K562 (cell line): ENCODE measurements at regions of chr14 and their contacts with region 1.

Region 1: DNA sequence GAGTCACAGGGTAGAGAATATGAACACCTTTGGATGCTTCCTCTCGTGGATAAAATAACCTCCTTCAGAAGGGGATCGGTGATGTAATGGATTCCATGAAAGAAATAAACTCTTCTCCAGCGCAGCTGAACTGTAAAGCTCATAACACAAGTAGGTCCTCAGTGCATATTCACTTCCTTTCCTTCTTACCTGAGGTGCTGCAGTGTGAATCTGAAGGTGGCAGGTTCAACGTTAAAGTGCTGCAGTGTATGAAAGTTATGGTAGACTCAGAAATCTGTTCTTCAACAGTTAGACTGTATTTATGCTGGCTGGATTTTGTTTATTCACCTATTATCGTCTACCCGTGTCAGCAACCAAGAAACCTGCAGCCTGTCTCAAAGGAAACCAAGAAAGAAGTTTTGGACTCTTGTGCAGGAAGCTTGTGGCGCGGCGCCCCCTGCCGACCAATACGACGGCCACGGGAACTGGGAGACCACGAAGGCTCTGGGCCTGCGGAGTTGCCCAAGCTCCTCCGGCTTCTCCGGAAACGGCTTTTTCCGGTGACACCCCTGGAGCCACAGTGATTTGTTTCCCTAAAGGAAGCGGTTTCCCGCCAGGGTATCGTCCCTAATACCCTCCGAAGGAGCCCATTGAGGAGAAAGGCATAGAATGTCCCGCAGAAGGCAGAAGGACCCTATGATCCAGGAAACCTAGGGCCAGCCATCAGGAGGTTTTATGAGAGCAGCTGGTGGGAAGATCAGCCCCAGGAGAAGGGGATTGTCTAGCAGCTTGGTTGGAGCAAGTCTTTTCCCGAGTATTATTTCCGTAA is 17.6 kb upstream of the RNASE3 start:
- DNase-seq: peak; percentile 44 to 81 (median 50)
- ATAC-seq: peak; percentile 99
- H3K4me3 ChIP-seq: no peak overlapping the region
- H3K27ac ChIP-seq: no peak overlapping the region
- H3K4me1 ChIP-seq: no peaks in the 10 kb centered on the region; a peak in 1 of 5 replicates
- H3K27me3 ChIP-seq: no peaks in the 10 kb centered on the region; a peak in 1 of 5 replicates
- CTCF ChIP-seq: peak; percentile 79 to 85 (median 84)
- EP300 ChIP-seq: no peak
- POLR2A ChIP-seq: no peak
- RAD21 ChIP-seq: peak; percentile 63 to 72

Region 2: GRCh38 chr14:20956376-20956976 is 82.9 kb after region 1 on chr14:
- CTCF ChIA-PET with region 1: no interaction called
- POLR2A ChIA-PET with region 1: no interaction called
- in situ Hi-C with region 1: loop called (anchors 5 kb)
- intact Hi-C with region 1: no loop called
- DNase-seq: no peak
- ATAC-seq: no peak; the same call in 2 of the 3 replicates
- H3K4me3 ChIP-seq: no peak overlapping the region
- H3K27ac ChIP-seq: no peak overlapping the region
- H3K4me1 ChIP-seq: no peaks in the 10 kb centered on the region
- H3K27me3 ChIP-seq: no peaks in the 10 kb centered on the region; a peak in 3 of 5 replicates
- CTCF ChIP-seq: no peak
- EP300 ChIP-seq: no peak
- POLR2A ChIP-seq: no peak
- RAD21 ChIP-seq: no peak

Region 3: DNA sequence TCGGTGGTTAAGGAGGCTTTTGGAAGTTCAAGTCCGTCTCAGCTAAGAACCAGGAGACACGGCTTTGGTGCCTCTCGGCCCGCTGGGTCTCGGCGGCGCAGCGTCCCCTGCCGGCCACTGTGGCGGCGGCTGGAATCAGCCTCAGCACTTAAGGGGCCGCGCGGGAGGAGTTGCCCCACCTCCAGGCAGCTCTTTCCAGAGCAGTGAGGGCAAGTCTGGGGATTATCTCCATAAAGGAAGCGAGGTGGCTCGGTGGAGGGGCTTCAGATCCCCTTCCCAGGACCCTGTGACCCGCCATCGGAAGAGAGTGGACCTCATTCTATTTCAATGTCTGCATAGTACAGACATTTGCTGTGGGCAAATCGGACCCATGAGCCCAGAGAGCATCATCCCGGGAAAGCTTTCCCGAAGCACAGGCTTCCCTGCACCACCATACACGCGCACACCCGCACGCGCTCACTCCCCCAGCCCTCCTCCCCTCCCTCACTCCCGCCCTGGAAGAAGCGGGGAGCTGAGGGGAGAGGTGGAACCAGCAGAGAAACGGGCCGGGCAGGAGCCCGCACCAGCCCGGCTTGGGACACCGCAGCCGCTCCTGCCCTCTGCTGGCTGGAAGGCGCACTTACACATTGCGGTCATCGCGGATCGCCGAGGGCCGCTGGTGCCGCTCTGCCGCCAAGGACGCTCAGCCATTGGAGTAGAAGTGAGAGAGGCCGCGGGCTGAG is 97.6 kb after region 1 on chr14:
- CTCF ChIA-PET with region 1: no interaction called
- POLR2A ChIA-PET with region 1: interaction called, 4 read pairs
- in situ Hi-C with region 1: no loop called
- intact Hi-C with region 1: loop called (anchors 5 kb)
- DNase-seq: peak; percentile 80 to 85 (median 84)
- ATAC-seq: peak; percentile 97
- H3K4me3 ChIP-seq: peak overlapping the region; percentile 48
- H3K27ac ChIP-seq: no peak overlapping the region
- H3K4me1 ChIP-seq: peaks cover 0 to 10% of the 10 kb centered on the region in 2 experiments; a peak in 3 of 5 replicates
- H3K27me3 ChIP-seq: no peaks in the 10 kb centered on the region; a peak in 2 of 5 replicates
- CTCF ChIP-seq: peak; percentile 90 to 94 (median 91)
- EP300 ChIP-seq: no peak
- POLR2A ChIP-seq: no peak
- RAD21 ChIP-seq: peak; percentile 56 to 65